ENCODE measurements at regions of chr5 and their contacts with region 1.

Region 1: GRCh38 chr5:34915139-34915855 is at the starts of genes BRIX1 and RAD1:
- DNase-seq: peak; percentile 96
- ATAC-seq: peak; percentile 100
- H3K4me3 ChIP-seq: peak within 1 kb of the TSS; percentile 98 to 99
- H3K27ac ChIP-seq: peak within 1 kb of the TSS; percentile 99
- H3K4me1 ChIP-seq: peaks cover 12% of the 10 kb centered on the region
- H3K27me3 ChIP-seq: no peaks in the 10 kb centered on the region
- CTCF ChIP-seq: no peak
- total RNA-seq, gene BRIX1: 46.6 TPM
- total RNA-seq, gene RAD1: 31.8 TPM

Region 2: DNA sequence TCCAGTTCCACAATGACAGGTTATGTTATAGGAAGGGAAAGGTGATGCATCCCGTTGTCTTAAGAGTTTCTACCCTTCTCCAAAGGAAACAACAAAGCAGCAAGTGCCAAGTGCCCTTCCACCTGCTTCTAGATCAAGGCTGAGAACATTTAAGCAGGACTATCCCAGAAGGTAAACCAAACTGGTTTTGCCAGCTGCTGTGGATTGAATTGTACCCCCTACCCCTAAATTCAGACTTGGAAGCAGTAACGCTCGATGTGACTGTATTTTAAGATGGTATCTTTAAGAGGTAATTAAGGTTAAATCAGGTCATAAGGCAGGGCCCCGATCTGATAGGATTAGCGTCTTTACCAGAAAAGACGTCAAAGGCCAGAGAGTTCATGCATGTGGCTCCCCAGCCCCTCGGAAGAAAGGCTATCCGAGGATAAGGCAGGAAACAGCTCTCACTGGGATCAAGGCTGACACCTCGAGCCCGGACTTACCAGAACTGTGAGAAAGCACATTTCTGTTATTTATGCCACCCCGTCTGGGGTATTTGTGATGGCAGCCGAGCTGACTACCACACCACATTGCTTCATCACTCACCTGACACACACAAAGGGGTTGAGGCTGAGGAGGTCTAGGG is 438.2 kb before region 1 on chr5:
- CTCF ChIA-PET with region 1: interaction called, 10 read pairs
- POLR2A ChIA-PET with region 1: no interaction called
- in situ Hi-C with region 1: no loop called
- intact Hi-C with region 1: no loop called
- DNase-seq: no peak
- ATAC-seq: no peak
- H3K4me3 ChIP-seq: no peak overlapping the region
- H3K27ac ChIP-seq: no peak overlapping the region
- H3K4me1 ChIP-seq: no peaks in the 10 kb centered on the region
- H3K27me3 ChIP-seq: no peaks in the 10 kb centered on the region
- CTCF ChIP-seq: no peak

Region 3: DNA sequence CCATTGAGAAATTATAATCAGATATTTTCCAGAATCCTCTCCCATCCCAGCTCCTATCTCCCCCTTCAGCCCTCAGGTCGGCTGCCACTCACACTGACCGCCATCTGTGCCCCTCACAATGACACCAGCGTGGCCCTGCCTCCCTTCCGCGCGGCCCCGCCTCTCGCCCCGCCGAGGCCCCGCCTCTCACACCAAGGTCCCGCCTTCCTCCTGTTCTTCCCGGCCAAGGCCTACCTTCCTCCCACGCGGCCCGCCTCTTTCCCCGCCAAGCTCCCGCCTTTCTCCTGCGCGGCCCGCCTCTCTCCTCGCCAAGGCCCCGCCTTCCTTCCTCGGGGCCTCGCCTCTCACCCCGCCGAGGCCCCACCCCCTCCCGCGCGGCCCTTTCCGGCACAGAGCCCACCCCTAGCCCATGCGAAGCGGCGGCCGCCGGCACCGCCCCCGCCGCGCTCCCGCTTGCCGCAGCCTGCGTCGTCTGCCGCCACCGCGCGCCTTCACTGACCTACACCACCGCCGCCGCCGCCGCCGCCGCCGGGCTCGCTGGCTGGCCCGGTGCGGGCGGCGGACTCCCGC is 13.9 kb after region 1 on chr5 and contains the start of gene DNAJC21:
- CTCF ChIA-PET with region 1: interaction called, 11 read pairs
- POLR2A ChIA-PET with region 1: interaction called, 17 read pairs
- in situ Hi-C with region 1: no loop called
- intact Hi-C with region 1: no loop called
- DNase-seq: peak; percentile 87
- ATAC-seq: peak; percentile 96
- H3K4me3 ChIP-seq: peak within 1 kb of the TSS; percentile 86 to 96
- H3K27ac ChIP-seq: peak within 1 kb of the TSS; percentile 97
- H3K4me1 ChIP-seq: peaks cover 24% of the 10 kb centered on the region
- H3K27me3 ChIP-seq: no peaks in the 10 kb centered on the region
- CTCF ChIP-seq: no peak
- total RNA-seq, gene DNAJC21: 54.5 TPM

Region 4: GRCh38 chr5:34941936-34942335 is 26.6 kb after region 1 on chr5:
- CTCF ChIA-PET with region 1: no interaction called
- POLR2A ChIA-PET with region 1: no interaction called
- in situ Hi-C with region 1: no loop called
- intact Hi-C with region 1: no loop called
- DNase-seq: no peak
- ATAC-seq: no peak
- H3K4me3 ChIP-seq: no peak overlapping the region
- H3K27ac ChIP-seq: no peak overlapping the region
- H3K4me1 ChIP-seq: no peaks in the 10 kb centered on the region
- H3K27me3 ChIP-seq: no peaks in the 10 kb centered on the region
- CTCF ChIP-seq: no peak